ENCODE measurements at regions of chr10 and their contacts with region 1.

Region 1: GRCh38 chr10:30392564-30392990 is 41.4 kb upstream of the MAP3K8 start:
- DNase-seq: peak; percentile 84 to 90
- H3K4me3 ChIP-seq: no peak overlapping the region
- H3K4me3 Mint-ChIP-seq: peak overlapping the region; percentile 49
- H3K27ac Mint-ChIP-seq: no peak overlapping the region
- H3K4me1 ChIP-seq: no peaks in the 10 kb centered on the region
- H3K4me1 Mint-ChIP-seq: no peaks in the 10 kb centered on the region
- H3K27me3 ChIP-seq: no peaks in the 10 kb centered on the region; the same call in 1 of the 2 replicates
- H3K27me3 Mint-ChIP-seq: peaks cover 12% of the 10 kb centered on the region
- CTCF ChIP-seq: peak; percentile 99

Region 2: DNA sequence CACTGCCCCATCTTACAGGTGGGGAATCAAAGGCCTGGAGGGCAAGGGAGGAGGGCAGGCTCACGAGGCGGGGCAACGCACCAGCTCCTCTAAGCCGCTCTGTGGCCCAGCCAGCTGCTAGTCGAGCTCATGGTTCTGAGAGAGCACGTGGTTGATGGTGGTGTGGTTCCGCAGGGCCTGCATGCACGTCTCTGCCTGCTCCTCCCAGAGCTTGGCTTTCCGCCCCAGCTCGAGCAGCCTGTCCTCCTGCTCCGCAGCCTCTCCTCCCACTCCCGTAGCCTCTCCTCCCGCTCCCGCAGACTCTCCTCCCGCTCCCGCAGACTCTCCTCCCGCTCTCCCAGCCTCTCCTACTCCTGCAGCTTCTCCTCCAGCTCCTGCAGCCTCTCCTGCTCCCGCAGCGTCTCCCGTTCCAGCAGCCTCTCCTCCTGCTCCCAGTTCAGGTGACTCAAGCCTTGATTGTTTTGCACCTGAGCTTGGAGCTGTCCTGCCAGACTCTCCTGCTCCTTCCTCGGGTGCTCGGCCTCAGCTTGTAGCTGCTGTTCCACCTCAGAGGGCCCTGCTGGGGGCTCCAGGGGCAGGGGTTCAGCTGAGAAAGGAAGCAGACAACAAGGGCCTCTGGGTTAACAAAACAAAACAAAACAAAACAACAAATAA is 24.4 kb before region 1 on chr10:
- CTCF ChIA-PET with region 1: no interaction called
- POLR2A ChIA-PET with region 1: no interaction called
- intact Hi-C with region 1: no loop called
- DNase-seq: no peak
- H3K4me3 ChIP-seq: no peak overlapping the region
- H3K4me3 Mint-ChIP-seq: no peak overlapping the region
- H3K27ac Mint-ChIP-seq: no peak overlapping the region
- H3K4me1 ChIP-seq: no peaks in the 10 kb centered on the region
- H3K4me1 Mint-ChIP-seq: peaks cover 7% of the 10 kb centered on the region
- H3K27me3 ChIP-seq: no peaks in the 10 kb centered on the region
- H3K27me3 Mint-ChIP-seq: no peaks in the 10 kb centered on the region
- CTCF ChIP-seq: no peak

Region 3: DNA sequence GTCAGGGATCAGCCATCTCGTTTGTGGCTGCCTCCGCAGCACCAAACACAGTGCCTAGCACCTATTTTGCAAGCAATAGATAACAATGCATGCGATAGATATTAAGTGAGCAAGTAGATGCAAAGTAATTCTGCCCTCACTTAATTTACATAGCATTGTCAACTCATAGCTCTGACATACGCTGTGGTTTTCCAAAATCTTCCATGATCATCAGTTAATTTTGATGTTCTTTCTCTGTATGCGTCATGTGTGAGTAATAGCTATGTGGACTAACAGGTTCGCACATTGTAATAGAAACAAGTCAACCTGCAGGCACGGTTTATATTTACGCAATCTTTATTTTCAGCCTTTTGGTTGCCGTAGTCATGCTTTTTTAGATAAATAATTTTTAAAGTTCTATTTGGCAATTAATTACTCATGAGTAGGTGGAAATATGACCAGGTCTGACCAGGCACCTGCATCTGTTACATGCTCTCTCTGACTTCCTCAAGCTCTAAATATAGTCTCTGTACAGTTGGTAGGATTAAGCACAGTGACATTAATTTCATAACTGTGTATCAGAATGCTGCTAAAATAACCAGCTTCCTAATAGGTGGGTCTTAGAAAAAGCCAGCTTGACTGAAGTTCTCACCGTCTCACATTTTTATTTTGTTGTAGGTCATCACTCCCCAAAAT is 54.7 kb after region 1 on chr10:
- CTCF ChIA-PET with region 1: no interaction called
- POLR2A ChIA-PET with region 1: no interaction called
- intact Hi-C with region 1: no loop called
- DNase-seq: no peak
- H3K4me3 ChIP-seq: no peak overlapping the region
- H3K4me3 Mint-ChIP-seq: no peak overlapping the region
- H3K27ac Mint-ChIP-seq: no peak overlapping the region
- H3K4me1 ChIP-seq: no peaks in the 10 kb centered on the region
- H3K4me1 Mint-ChIP-seq: no peaks in the 10 kb centered on the region
- H3K27me3 ChIP-seq: no peaks in the 10 kb centered on the region
- H3K27me3 Mint-ChIP-seq: no peaks in the 10 kb centered on the region
- CTCF ChIP-seq: no peak

Region 4: DNA sequence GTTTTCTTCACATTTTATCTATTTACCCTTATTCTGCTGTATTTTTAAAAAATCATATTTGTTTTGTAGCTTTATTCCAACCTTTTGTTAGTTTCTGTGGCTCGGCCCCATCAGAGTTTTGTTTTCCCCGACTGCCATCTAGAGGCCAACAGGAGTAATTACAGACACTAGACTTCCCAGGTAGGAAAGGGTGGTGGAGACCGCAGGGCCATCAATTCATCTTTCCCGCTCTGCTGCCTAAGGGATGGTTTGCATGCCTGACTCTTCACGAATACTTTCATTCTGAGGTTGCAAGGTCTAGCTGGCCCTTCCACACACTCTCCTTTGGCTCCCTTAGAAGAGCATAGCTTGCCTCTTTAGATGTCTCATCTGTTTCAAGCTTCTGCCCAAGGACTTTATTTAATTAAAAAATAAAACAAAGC is 198.7 kb after region 1 on chr10:
- CTCF ChIA-PET with region 1: interaction called, 23 read pairs
- POLR2A ChIA-PET with region 1: no interaction called
- intact Hi-C with region 1: loop called (anchors 1 kb)
- DNase-seq: peak in 1 of 2 experiments; percentile 61
- H3K4me3 ChIP-seq: no peak overlapping the region
- H3K4me3 Mint-ChIP-seq: no peak overlapping the region
- H3K27ac Mint-ChIP-seq: no peak overlapping the region
- H3K4me1 ChIP-seq: no peaks in the 10 kb centered on the region
- H3K4me1 Mint-ChIP-seq: peaks cover 6% of the 10 kb centered on the region
- H3K27me3 ChIP-seq: no peaks in the 10 kb centered on the region
- H3K27me3 Mint-ChIP-seq: peaks cover 6% of the 10 kb centered on the region
- CTCF ChIP-seq: peak; percentile 81 to 84

Region 5: GRCh38 chr10:30639946-30640786 is 247.6 kb after region 1 on chr10:
- CTCF ChIA-PET with region 1: no interaction called
- POLR2A ChIA-PET with region 1: no interaction called
- intact Hi-C with region 1: loop called (anchors 2 kb)
- DNase-seq: peak in 1 of 2 experiments; percentile 41
- H3K4me3 ChIP-seq: no peak overlapping the region
- H3K4me3 Mint-ChIP-seq: no peak overlapping the region
- H3K27ac Mint-ChIP-seq: no peak overlapping the region
- H3K4me1 ChIP-seq: no peaks in the 10 kb centered on the region
- H3K4me1 Mint-ChIP-seq: no peaks in the 10 kb centered on the region
- H3K27me3 ChIP-seq: no peaks in the 10 kb centered on the region; the same call in 1 of the 2 replicates
- H3K27me3 Mint-ChIP-seq: peaks cover 21% of the 10 kb centered on the region
- CTCF ChIP-seq: peak; percentile 91 to 97